Ovary (tissue), 10 donors: ENCODE measurements at regions of chr5 and their contacts with region 1.

Region 1: GRCh38 chr5:68287976-68288706 is 72.6 kb downstream of the PIK3R1 start:
- DNase-seq: peak; percentile 52 to 81 (median 75)
- H3K4me3 ChIP-seq: peak overlapping the region; percentile 52
- H3K27ac ChIP-seq: peak overlapping the region; percentile 4 to 74
- H3K4me1 ChIP-seq: peaks cover 6% of the 10 kb centered on the region
- H3K27me3 ChIP-seq: no peaks in the 10 kb centered on the region
- CTCF ChIP-seq: no peak
- EP300 ChIP-seq: no peak
- POLR2A ChIP-seq: no peak

Region 2: DNA sequence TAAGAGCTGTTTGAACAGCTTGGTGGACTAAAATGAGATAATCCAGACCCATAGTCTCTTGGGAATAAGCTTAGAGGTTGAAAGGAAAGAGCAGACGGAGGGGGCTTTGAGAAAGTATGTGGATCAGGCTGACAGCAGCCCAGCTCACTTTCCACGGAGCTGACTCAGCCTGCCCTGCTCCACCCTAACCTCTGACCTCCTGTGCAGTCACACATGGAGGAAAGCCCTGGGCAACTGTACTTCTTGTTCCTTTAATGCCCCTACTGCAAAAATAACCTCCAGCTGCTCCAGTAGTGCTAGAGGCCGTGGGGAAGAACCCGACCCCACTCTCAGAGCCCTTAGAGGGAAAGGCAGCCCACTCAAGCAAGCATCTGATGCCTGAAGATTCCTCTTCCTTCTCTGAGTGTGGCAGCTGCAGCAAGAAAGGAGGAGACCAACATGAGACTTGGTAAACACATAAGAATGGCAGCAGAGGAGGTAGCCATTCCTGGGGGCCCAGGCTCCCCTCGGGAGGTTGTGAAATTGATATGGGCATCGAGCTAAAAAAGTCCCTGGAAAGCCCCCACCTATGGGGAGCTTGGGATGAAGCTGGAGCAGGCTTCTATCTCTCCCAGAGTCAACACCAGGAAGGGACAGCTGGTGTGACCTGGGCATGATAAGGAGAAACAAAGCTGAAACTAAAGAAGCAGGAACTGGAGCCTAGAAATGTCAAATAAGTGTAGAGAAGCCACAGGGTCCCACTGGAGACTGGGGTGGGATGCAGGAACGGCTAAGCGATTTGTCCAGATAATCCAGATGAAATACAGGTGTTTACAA is 131.7 kb after region 1 on chr5:
- intact Hi-C with region 1: no loop called
- DNase-seq: peak in 3 of 5 donors; percentile 30 to 63 (median 32)
- H3K4me3 ChIP-seq: no peak overlapping the region
- H3K27ac ChIP-seq: peak overlapping the region; percentile 2 to 51
- H3K4me1 ChIP-seq: peaks cover 16% of the 10 kb centered on the region
- H3K27me3 ChIP-seq: no peaks in the 10 kb centered on the region
- CTCF ChIP-seq: no peak
- EP300 ChIP-seq: no peak
- POLR2A ChIP-seq: no peak

Region 3: GRCh38 chr5:68962757-68963484 is 674.8 kb after region 1 on chr5:
- intact Hi-C with region 1: loop called in 3 of 4 experiments (anchors 5 kb)
- DNase-seq: peak; percentile 62 to 79 (median 71)
- H3K4me3 ChIP-seq: no peak overlapping the region
- H3K27ac ChIP-seq: peak overlapping the region in 1 of 2 donors; percentile 40
- H3K4me1 ChIP-seq: no peaks in the 10 kb centered on the region
- H3K27me3 ChIP-seq: no peaks in the 10 kb centered on the region
- CTCF ChIP-seq: peak; percentile 44 to 78 (median 77)
- EP300 ChIP-seq: no peak
- POLR2A ChIP-seq: no peak